IMR-90 (cell line): ENCODE measurements at regions of chr7 and their contacts with region 1.

Region 1: DNA sequence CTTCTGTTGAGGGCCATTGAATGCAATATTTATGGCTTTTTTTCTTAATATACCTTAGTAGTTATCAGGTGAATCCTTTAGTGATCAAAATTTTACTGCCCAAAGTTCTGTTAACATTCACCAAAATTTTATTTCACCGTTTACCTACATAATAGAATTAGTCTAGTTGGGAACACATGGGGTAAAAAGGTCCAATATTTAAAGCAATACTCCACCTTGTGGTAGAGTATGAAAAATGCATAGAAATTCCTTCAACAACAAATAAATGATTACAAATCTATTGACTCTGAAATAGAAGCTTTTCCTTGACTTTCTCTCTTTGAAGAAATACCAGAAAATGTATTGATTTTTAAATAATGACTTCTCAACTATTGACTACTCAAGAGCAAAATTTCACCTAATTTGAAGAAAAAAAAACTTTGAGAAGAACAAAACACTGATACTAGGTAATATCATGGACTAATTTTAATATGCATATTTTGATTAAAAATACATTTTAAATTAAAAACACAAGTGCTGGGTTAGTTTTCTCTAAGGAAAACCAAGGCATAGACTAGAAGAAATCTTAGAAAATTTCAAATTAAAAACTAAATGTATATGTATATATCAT is 43.3 kb downstream of the POLR1F start:
- DNase-seq: peak; percentile 50
- ATAC-seq: 0 out of 2 replicates have a peak, but pooled peaks have one; percentile 54
- H3K4me3 ChIP-seq: no peak overlapping the region
- H3K27ac ChIP-seq: no peak overlapping the region
- H3K4me1 ChIP-seq: no peaks in the 10 kb centered on the region
- H3K27me3 ChIP-seq: no peaks in the 10 kb centered on the region
- CTCF ChIP-seq: peak; percentile 67
- POLR2A ChIP-seq: no peak
- RAD21 ChIP-seq: peak; percentile 59

Region 2: DNA sequence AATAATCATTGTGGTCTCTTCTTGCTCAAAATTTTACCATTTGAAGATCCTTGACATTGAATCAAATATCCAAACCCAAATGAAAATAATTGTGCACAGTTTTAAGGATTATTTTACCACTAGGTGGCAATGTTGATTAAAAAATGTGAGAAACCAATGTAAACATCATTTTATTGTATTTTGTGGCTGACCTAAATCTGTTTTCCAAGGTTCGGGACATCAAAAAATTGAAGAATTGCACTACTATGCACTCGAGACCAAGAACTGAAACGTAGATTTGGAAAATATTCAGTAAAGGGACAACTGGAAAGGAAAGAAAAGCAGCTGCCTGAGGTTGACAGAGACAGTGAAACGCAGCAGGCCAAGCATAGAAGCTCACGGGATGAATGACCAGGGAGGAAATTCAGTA is 1984.6 kb before region 1 on chr7:
- CTCF ChIA-PET with region 1: no interaction called
- POLR2A ChIA-PET with region 1: no interaction called
- dilution Hi-C with region 1: no loop called
- in situ Hi-C with region 1: no loop called
- intact Hi-C with region 1: loop called (anchors 5 kb)
- DNase-seq: peak; percentile 49
- ATAC-seq: no peak
- H3K4me3 ChIP-seq: no peak overlapping the region
- H3K27ac ChIP-seq: peak overlapping the region; percentile 55; the same call in 1 of the 2 replicates
- H3K4me1 ChIP-seq: peaks cover 15% of the 10 kb centered on the region
- H3K27me3 ChIP-seq: no peaks in the 10 kb centered on the region
- CTCF ChIP-seq: peak; percentile 66
- POLR2A ChIP-seq: no peak
- RAD21 ChIP-seq: peak; percentile 67

Region 3: DNA sequence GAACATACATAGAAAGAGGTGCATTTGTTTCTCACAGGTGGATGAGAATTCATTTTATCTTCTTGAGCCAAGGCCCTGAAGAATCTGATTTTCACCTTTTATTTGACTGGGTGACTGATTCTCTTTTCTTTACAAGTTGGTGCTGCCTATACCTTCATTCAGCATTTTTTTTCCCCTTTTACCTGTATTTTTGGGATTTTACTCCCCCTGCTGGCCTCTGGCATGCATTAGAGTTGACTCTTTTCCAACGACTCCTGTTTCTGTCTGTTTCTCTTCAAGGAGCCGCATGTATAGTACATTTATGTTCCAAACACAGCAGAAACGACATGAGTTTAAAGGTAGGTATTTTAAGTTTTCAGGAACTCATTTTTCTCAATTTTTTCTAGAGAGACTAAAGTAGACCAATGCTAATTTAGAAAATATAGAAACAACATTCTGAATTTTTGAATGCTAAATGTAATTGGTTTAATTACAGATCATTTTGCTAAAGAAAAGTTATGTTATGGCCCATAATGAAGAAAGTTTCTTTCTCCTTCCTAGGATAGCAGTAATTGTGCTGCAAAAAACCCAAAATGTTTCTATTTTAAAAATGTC is 1319.8 kb before region 1 on chr7:
- CTCF ChIA-PET with region 1: no interaction called
- POLR2A ChIA-PET with region 1: no interaction called
- dilution Hi-C with region 1: no loop called
- in situ Hi-C with region 1: loop called (anchors 10 kb)
- intact Hi-C with region 1: loop called (anchors 5 kb)
- DNase-seq: peak; percentile 46
- ATAC-seq: peak; percentile 49; the same call in 1 of the 2 replicates
- H3K4me3 ChIP-seq: no peak overlapping the region
- H3K27ac ChIP-seq: no peak overlapping the region
- H3K4me1 ChIP-seq: no peaks in the 10 kb centered on the region
- H3K27me3 ChIP-seq: no peaks in the 10 kb centered on the region
- CTCF ChIP-seq: peak; percentile 78
- POLR2A ChIP-seq: no peak
- RAD21 ChIP-seq: peak; percentile 73

Region 4: DNA sequence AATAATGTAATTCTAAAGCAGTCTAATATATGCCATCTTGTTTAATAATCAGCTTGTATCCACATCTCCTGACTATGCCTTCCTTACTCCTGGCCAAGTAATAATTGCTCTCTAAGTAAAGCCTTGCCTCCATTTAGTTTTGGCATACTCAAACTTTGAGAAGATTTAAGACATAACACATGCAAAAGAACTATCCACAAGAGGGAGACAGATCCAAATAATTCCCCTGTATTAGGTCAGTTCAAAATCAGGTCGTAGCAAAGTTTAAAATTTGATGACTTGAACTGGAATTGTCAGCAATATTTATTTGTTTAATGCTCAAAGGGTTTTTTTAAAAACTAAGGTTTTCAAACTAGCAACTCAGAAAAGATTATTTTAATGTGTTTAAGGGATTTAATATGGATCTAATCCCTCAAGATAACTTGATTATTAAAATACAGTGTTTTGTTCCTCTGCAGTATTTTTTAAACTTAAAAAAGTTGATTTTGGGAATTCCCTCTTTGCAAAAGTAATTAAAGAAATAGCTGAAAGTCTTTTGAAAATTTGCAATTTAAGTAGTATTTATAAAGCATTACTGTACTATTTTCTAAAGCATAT is 1074.7 kb before region 1 on chr7:
- CTCF ChIA-PET with region 1: no interaction called
- POLR2A ChIA-PET with region 1: no interaction called
- dilution Hi-C with region 1: no loop called
- in situ Hi-C with region 1: loop called (anchors 10 kb)
- intact Hi-C with region 1: loop called (anchors 1 kb)
- DNase-seq: peak; percentile 67
- ATAC-seq: peak; percentile 80
- H3K4me3 ChIP-seq: no peak overlapping the region
- H3K27ac ChIP-seq: no peak overlapping the region
- H3K4me1 ChIP-seq: 0 out of 2 replicates have a peak, but pooled peaks cover 1% of the 10 kb centered on the region
- H3K27me3 ChIP-seq: no peaks in the 10 kb centered on the region
- CTCF ChIP-seq: peak; percentile 68
- POLR2A ChIP-seq: no peak
- RAD21 ChIP-seq: peak; percentile 81

Region 5: DNA sequence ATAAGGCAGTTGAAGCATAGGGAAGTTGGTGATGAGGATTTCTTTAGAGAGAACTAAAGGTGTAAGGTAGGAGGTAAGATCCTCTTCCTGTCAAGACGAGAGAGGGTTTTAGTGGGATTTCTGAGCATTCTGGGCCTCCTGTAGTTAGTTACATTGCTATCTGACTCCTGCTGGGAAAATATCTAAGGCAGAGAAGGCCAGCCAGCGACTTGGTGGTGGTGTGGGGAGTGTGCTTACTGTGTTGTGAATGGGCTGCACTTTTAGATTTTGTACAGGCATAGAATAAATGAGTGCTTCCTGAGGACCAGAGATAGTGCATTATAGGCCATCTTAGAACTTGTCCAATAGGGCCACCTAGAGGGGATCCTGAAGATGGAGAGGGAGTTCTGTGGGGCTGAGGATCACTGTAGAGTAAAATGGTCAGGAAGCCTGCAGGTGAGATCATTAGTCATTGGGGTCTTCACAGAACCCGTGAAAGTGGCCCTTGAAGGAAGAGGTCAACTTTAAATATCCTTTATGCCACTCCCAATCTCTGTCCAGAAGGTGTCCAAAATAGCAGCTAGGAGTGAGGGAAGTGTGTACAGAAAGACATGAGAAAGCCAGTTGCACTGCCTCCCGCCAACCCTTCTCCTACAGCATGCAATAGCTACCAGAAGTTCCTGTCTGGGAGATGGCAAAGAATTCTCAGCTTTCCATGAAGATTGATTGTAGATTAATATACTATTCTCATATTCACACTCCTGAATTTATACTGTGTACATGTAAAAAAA is 223.3 kb before region 1 on chr7:
- CTCF ChIA-PET with region 1: no interaction called
- POLR2A ChIA-PET with region 1: no interaction called
- dilution Hi-C with region 1: no loop called
- in situ Hi-C with region 1: no loop called
- intact Hi-C with region 1: loop called (anchors 10 kb)
- DNase-seq: peak; percentile 75
- ATAC-seq: peak; percentile 99
- H3K4me3 ChIP-seq: no peak overlapping the region
- H3K27ac ChIP-seq: no peak overlapping the region
- H3K4me1 ChIP-seq: no peaks in the 10 kb centered on the region
- H3K27me3 ChIP-seq: no peaks in the 10 kb centered on the region
- CTCF ChIP-seq: peak; percentile 83
- POLR2A ChIP-seq: no peak
- RAD21 ChIP-seq: peak; percentile 91